Mammary epithelial cell (primary cell): ENCODE measurements at regions of chr9 and their contacts with region 1.

Region 1: GRCh38 chr9:5073701-5074100 is 88.6 kb downstream of the JAK2 start:
- DNase-seq: no peak
- H3K4me3 ChIP-seq: no peak overlapping the region
- H3K27ac ChIP-seq: no peak overlapping the region
- H3K4me1 ChIP-seq: no peaks in the 10 kb centered on the region
- H3K27me3 ChIP-seq: no peaks in the 10 kb centered on the region
- CTCF ChIP-seq: no peak

Region 2: DNA sequence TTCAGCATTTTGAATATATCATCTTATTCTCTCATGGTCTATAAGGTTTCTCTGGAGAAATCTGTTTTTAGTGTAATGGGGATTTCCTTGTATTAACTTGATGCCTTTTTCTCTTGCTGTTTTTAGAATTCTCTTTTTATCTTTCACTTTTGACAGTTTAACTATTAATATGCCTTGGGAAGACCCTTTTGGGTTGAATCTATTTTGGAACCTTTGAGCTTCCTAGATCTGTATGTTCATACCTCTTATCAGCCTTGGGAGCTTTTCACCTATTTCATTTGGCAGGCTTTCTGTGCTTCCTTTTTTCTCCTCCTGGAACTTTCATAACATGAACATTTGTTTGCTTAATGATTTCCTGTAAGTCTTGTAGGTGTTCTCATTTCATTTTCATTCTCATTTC is 258.8 kb before region 1 on chr9:
- CTCF ChIA-PET with region 1: no interaction called
- dilution Hi-C with region 1: no loop called
- in situ Hi-C with region 1: no loop called
- intact Hi-C with region 1: no loop called
- DNase-seq: no peak
- H3K4me3 ChIP-seq: no peak overlapping the region
- H3K27ac ChIP-seq: no peak overlapping the region
- H3K4me1 ChIP-seq: no peaks in the 10 kb centered on the region
- H3K27me3 ChIP-seq: no peaks in the 10 kb centered on the region
- CTCF ChIP-seq: no peak

Region 3: GRCh38 chr9:4994166-4994890 is 79.4 kb before region 1 on chr9:
- CTCF ChIA-PET with region 1: no interaction called
- dilution Hi-C with region 1: no loop called
- in situ Hi-C with region 1: no loop called
- intact Hi-C with region 1: no loop called
- DNase-seq: no peak
- H3K4me3 ChIP-seq: no peak overlapping the region
- H3K27ac ChIP-seq: no peak overlapping the region
- H3K4me1 ChIP-seq: no peaks in the 10 kb centered on the region
- H3K27me3 ChIP-seq: no peaks in the 10 kb centered on the region
- CTCF ChIP-seq: no peak

Region 4: DNA sequence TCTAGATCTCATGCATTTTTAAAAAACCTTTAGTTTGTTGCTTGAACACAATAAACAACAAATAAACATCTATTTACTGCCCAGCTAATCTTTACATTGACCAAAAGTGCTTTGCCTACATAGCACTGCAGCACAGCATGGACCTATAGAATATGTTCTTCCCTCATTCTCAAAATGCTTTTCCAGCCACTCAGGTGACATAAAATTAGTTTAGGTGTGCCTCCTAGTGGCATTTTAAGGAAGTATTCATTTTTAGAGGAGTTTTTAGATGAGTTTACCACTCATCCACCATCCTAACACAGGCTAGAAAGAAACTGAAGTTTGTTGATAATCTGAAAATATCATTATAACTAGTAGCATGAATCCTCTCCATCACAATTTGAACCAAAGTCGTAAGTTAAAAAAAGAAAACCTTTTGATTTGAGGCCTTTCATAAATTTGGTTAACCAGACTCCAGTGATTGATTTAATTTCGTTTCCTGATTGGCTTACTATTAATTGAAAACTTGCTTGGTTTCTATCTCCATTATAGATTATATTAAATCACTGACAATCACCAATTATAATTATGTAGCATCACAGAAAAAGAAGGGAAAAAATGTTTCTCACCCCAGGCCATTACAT is 351.4 kb after region 1 on chr9:
- CTCF ChIA-PET with region 1: no interaction called
- dilution Hi-C with region 1: no loop called
- in situ Hi-C with region 1: no loop called
- intact Hi-C with region 1: loop called (anchors 10 kb)
- DNase-seq: peak; percentile 34
- H3K4me3 ChIP-seq: no peak overlapping the region
- H3K27ac ChIP-seq: no peak overlapping the region
- H3K4me1 ChIP-seq: no peaks in the 10 kb centered on the region
- H3K27me3 ChIP-seq: no peaks in the 10 kb centered on the region
- CTCF ChIP-seq: peak; percentile 46 to 60

Region 5: GRCh38 chr9:5437254-5438216 is 363.8 kb after region 1 on chr9 and contains the start of gene PLGRKT:
- CTCF ChIA-PET with region 1: no interaction called
- dilution Hi-C with region 1: no loop called
- in situ Hi-C with region 1: no loop called
- intact Hi-C with region 1: no loop called
- DNase-seq: peak; percentile 89
- H3K4me3 ChIP-seq: peak within 1 kb of the TSS; percentile 67 to 87 (median 75)
- H3K27ac ChIP-seq: peak within 1 kb of the TSS; percentile 82
- H3K4me1 ChIP-seq: peaks cover 30% of the 10 kb centered on the region
- H3K27me3 ChIP-seq: no peaks in the 10 kb centered on the region
- CTCF ChIP-seq: peak in 1 of 2 donors; percentile 26
- total RNA-seq, gene PLGRKT: 13.3 to 31.2 TPM